H1 (cell line): ENCODE measurements at regions of chr7 and their contacts with region 1.

Region 1: GRCh38 chr7:45646996-45647825 is 73.0 kb downstream of the ADCY1 start:
- DNase-seq: peak in 1 of 2 experiments; percentile 53
- H3K4me3 ChIP-seq: no peak overlapping the region
- H3K27ac ChIP-seq: no peak overlapping the region
- H3K4me1 ChIP-seq: no peaks in the 10 kb centered on the region; a peak in 1 of 7 replicates
- H3K27me3 ChIP-seq: no peaks in the 10 kb centered on the region
- CTCF ChIP-seq: peak; percentile 22 to 38 (median 37); a peak in 3 of 4 replicates
- EP300 ChIP-seq: no peak
- POLR2A ChIP-seq: no peak
- RAD21 ChIP-seq: peak; percentile 4 to 17; a peak in 2 of 4 replicates

Region 2: DNA sequence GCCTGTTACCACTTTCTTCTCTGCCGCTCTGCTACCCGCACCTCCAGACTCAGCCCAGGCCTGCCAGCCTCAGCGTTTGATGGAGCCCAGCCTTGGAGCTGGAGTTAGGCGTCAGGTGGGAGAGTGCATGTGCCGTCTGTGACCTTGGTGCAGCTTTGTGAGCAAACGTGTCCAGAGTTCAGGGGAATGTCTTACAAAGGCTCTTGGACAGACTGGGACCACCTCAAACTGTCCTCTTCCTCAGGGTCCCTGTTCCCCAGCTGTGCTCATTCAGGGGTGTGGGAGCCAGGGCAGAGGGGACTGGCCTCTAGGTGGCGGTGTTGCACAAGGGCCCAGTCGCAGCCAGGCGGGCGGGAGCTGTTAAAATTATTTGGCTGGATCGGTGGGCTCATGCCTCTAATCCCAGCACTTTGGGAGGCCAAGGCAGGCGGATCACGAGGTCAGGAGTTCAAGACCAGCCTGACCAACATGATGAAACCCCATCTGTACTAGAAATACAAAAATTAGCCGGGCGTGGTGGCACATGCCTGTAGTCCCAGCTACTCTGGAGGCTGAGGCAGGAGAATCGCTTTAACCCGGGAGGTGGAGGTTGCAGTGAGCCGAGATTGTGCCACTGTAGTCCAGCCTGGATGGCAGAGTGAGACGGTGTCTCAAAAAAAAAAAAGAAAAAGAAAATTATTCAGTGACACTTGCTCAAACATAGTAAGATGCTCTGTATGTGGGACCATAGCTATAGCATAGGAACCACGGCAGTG is 16.1 kb after region 1 on chr7:
- CTCF ChIA-PET with region 1: interaction called, 28 read pairs
- POLR2A ChIA-PET with region 1: interaction called, 5 read pairs
- DNase-seq: peak; percentile 9 to 87
- H3K4me3 ChIP-seq: no peak overlapping the region
- H3K27ac ChIP-seq: no peak overlapping the region
- H3K4me1 ChIP-seq: no peaks in the 10 kb centered on the region; a peak in 1 of 7 replicates
- H3K27me3 ChIP-seq: no peaks in the 10 kb centered on the region
- CTCF ChIP-seq: peak; percentile 77 to 95 (median 86)
- EP300 ChIP-seq: no peak
- POLR2A ChIP-seq: no peak
- RAD21 ChIP-seq: peak; percentile 80 to 82